Activated T-helper 1 cell treated with anti-CD3 and anti-CD28 coated beads, Interleukin-12 subunit alpha, Interleukin-12 subunit beta, Interleukin-2, Interleukin-4 antibody, amounts not matched to agents 30 ng/mL and 10 ng/mL and 1 ng/mL, durations not matched to agents 14 hours and 24 hours and 36 hours (primary cell): ENCODE measurements at regions of chr10 and their contacts with region 1.

Region 1: GRCh38 chr10:35195361-35196306 is 69.0 kb downstream of the CREM start:
- DNase-seq: peak; percentile 76
- H3K4me3 Mint-ChIP-seq: peak overlapping the region; percentile 92
- H3K27ac Mint-ChIP-seq: peak overlapping the region; percentile 99
- H3K4me1 Mint-ChIP-seq: peaks cover 64% of the 10 kb centered on the region
- H3K27me3 Mint-ChIP-seq: no peaks in the 10 kb centered on the region

Region 2: GRCh38 chr10:34906067-34906965 is 289.3 kb before region 1 on chr10:
- intact Hi-C with region 1: no loop called
- DNase-seq: no peak
- H3K4me3 Mint-ChIP-seq: no peak overlapping the region
- H3K27ac Mint-ChIP-seq: no peak overlapping the region
- H3K4me1 Mint-ChIP-seq: no peaks in the 10 kb centered on the region
- H3K27me3 Mint-ChIP-seq: no peaks in the 10 kb centered on the region

Region 3: DNA sequence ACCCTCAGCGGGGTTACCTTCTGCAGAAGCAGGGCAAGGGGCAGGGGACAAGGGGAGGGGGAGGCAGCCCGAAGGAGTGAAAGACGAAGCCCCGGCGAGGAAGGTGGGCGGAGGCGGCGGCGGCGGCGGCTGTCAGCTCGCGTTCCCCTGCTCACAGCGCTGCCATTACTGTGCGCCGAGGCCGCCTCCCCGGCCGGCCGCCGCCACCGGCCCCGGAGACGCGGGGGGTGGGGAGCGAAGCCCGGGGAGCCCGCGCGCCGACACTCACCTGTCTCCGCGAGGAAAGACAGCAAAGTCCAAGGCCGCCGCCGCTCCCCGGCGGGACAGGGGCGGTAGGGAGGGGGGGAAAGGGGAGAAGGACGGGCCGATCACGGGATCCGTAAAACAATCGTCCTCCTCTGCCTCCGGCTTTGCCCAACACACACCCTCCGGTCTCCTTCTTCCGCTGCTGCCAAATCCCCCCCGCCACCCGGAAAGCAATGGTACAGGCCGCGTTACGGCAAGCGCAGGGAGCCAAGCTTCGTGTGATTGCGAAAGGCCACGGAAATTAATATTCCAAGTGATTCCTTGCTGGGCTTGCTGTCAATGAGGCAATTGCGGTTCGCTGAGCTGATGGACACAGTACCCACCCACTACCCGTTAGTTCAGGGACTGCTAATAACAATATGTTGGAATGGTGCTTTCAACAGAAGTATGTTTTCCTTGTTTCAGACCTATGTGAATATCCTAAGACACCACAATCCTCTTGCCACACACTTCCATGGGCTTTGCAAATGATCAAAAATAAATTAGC is 105.3 kb before region 1 on chr10 and contains the start of gene CUL2:
- intact Hi-C with region 1: loop called (anchors 1 kb)
- DNase-seq: peak; percentile 90
- H3K4me3 Mint-ChIP-seq: peak within 1 kb of the TSS; percentile 98
- H3K27ac Mint-ChIP-seq: peak within 1 kb of the TSS; percentile 99
- H3K4me1 Mint-ChIP-seq: peaks cover 38% of the 10 kb centered on the region
- H3K27me3 Mint-ChIP-seq: peaks cover 9% of the 10 kb centered on the region
- total RNA-seq, gene CUL2: 49.8 and 50.5 TPM in 2 replicates

Region 4: GRCh38 chr10:35132727-35133126 is 62.9 kb before region 1 on chr10:
- intact Hi-C with region 1: loop called (anchors 1 kb)
- DNase-seq: no peak
- H3K4me3 Mint-ChIP-seq: peak overlapping the region; percentile 71
- H3K27ac Mint-ChIP-seq: peak overlapping the region; percentile 84
- H3K4me1 Mint-ChIP-seq: peaks cover 80% of the 10 kb centered on the region
- H3K27me3 Mint-ChIP-seq: no peaks in the 10 kb centered on the region

Region 5: GRCh38 chr10:35208536-35208935 is 12.9 kb after region 1 on chr10:
- intact Hi-C with region 1: loop called (anchors 1 kb)
- DNase-seq: peak; percentile 60
- H3K4me3 Mint-ChIP-seq: peak overlapping the region; percentile 75
- H3K27ac Mint-ChIP-seq: peak overlapping the region; percentile 94
- H3K4me1 Mint-ChIP-seq: peaks cover 61% of the 10 kb centered on the region
- H3K27me3 Mint-ChIP-seq: no peaks in the 10 kb centered on the region

Region 6: DNA sequence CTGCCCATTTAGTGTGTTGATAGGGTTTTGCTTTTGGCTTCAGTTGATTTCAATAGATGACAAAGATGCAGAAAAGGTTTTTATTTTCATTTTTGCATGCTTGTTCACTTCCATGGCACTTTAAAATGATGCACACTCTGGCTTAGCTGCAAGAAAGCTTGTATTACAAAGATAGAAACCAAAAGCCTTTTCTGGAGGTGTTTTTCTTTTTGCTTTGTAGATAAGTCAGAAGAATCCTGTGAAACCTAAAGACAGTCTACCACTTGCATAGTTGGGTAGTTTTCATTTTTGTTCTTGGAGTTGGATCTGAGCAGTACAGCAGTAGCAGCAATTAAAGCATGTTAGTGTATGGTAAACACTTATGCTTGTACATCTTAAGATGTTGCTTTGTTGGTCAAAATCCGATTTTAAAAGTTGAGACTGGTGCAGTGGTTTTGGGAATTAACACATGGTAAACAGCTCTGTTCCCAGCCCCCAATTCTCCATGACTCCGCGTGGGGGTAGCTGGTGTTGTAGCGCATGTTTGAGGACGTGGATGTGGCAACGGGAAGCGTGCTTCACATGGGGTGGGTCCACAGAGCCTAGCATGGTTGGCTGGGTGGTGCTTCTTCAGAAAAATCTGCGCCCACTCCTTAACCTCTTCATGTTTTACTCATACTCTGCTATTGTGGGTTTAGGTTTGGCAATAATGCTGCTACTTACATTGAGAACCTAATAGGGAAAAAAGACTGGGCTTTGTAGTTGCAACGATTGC is 160.5 kb after region 1 on chr10:
- intact Hi-C with region 1: loop called (anchors 1 kb)
- DNase-seq: no peak
- H3K4me3 Mint-ChIP-seq: peak overlapping the region; percentile 71
- H3K27ac Mint-ChIP-seq: peak overlapping the region; percentile 93
- H3K4me1 Mint-ChIP-seq: peaks cover 67% of the 10 kb centered on the region
- H3K27me3 Mint-ChIP-seq: no peaks in the 10 kb centered on the region

Region 7: GRCh38 chr10:35642027-35642792 is 446.6 kb after region 1 on chr10 and contains the start of gene FZD8:
- intact Hi-C with region 1: loop called (anchors 2 kb)
- DNase-seq: peak; percentile 54
- H3K4me3 Mint-ChIP-seq: peak within 1 kb of the TSS; percentile 83
- H3K27ac Mint-ChIP-seq: no peak within 1 kb of the TSS
- H3K4me1 Mint-ChIP-seq: peaks cover 14% of the 10 kb centered on the region
- H3K27me3 Mint-ChIP-seq: peaks cover 67% of the 10 kb centered on the region
- total RNA-seq, gene FZD8: 0.41 and 0.56 TPM in 2 replicates